GM12878 (cell line): ENCODE measurements at regions of chr7 and their contacts with region 1.

Region 1: DNA sequence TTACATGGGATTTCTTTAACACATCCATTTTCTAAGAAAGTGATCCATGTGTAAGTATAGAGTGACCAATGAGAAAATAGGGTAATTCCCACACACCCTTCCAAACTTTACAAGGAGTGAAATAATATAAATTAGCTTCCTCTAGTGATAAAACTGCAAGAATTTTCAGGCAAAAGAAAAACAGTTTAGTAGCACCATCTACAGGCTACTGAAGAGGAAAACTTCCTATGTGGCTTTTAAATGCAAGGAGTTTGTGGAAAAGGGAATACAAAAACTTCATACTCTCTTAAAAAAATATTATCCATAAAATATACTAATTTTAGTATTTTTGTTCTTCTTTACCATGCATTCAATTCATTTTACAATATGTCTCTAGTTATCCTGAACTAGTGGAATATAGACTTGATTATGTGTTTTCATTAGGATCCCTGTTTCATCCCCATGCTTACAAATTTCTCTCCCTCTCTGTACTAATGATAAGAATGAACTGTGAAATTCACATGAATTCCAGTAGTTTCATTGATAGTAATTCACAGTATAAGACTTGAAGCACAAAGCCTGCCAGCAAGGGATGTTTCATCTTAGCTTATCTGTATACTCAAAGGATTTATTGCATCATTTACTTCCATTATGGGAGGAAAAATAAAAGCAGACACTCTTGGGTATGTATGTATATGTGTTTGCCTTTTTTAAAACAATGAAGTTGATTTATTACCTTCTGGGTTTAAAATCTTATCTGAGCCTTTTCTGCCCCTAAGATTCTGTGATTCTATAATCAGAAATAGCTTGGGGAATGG is 442.9 kb downstream of the AUTS2 start:
- DNase-seq: no peak
- ATAC-seq: no peak
- H3K4me3 ChIP-seq: no peak overlapping the region
- H3K27ac ChIP-seq: no peak overlapping the region
- H3K4me1 ChIP-seq: no peaks in the 10 kb centered on the region
- H3K27me3 ChIP-seq: no peaks in the 10 kb centered on the region
- CTCF ChIP-seq: peak; percentile 26 to 52 (median 27); a peak in 4 of 6 replicates
- EP300 ChIP-seq: no peak
- POLR2A ChIP-seq: no peak
- RAD21 ChIP-seq: peak; percentile 65

Region 2: GRCh38 chr7:69403169-69403568 is 638.0 kb before region 1 on chr7:
- CTCF ChIA-PET with region 1: interaction called, 4 read pairs
- POLR2A ChIA-PET with region 1: no interaction called
- RAD21 ChIA-PET with region 1: no interaction called
- SMC1A ChIA-PET with region 1: no interaction called
- in situ Hi-C with region 1: no loop called
- intact Hi-C with region 1: loop called (anchors 10 kb)
- DNase-seq: no peak
- ATAC-seq: peak; percentile 95
- H3K4me3 ChIP-seq: no peak overlapping the region
- H3K27ac ChIP-seq: no peak overlapping the region
- H3K4me1 ChIP-seq: no peaks in the 10 kb centered on the region
- H3K27me3 ChIP-seq: no peaks in the 10 kb centered on the region
- CTCF ChIP-seq: peak; percentile 39 to 47 (median 43); a peak in 5 of 6 replicates
- EP300 ChIP-seq: no peak
- POLR2A ChIP-seq: no peak
- RAD21 ChIP-seq: peak; percentile 74

Region 3: GRCh38 chr7:69968969-69969556 is 72.1 kb before region 1 on chr7:
- CTCF ChIA-PET with region 1: no interaction called
- POLR2A ChIA-PET with region 1: no interaction called
- RAD21 ChIA-PET with region 1: no interaction called
- SMC1A ChIA-PET with region 1: no interaction called
- in situ Hi-C with region 1: no loop called
- intact Hi-C with region 1: no loop called
- DNase-seq: no peak
- ATAC-seq: peak; percentile 53
- H3K4me3 ChIP-seq: no peak overlapping the region
- H3K27ac ChIP-seq: no peak overlapping the region
- H3K4me1 ChIP-seq: peaks cover 7% of the 10 kb centered on the region; the same call in 1 of the 2 replicates
- H3K27me3 ChIP-seq: no peaks in the 10 kb centered on the region
- CTCF ChIP-seq: no peak
- EP300 ChIP-seq: no peak
- POLR2A ChIP-seq: no peak
- RAD21 ChIP-seq: no peak

Region 4: DNA sequence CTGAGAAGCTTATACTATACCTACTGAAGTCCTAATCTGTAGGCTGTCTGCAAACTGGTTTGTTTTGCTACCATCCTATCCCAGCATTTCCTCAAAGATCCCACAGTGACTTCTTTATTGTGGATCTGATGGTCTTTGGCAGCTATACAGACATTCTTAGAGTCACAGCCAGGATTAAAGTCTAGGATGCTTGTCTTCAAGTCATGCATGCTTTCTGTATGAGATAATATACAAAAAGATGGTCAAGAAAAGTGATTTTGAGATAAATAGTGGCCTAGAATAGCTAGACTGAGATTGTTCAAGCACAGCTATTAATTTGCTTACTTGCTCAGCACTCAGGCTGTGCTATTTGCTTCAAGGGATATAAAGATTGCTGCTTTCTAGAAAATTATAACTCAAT is 11.5 kb after region 1 on chr7:
- CTCF ChIA-PET with region 1: interaction called, 6 read pairs
- POLR2A ChIA-PET with region 1: no interaction called
- RAD21 ChIA-PET with region 1: no interaction called
- SMC1A ChIA-PET with region 1: interaction called, 17 read pairs
- in situ Hi-C with region 1: no loop called
- intact Hi-C with region 1: no loop called
- DNase-seq: no peak
- ATAC-seq: no peak
- H3K4me3 ChIP-seq: no peak overlapping the region
- H3K27ac ChIP-seq: no peak overlapping the region
- H3K4me1 ChIP-seq: no peaks in the 10 kb centered on the region
- H3K27me3 ChIP-seq: no peaks in the 10 kb centered on the region
- CTCF ChIP-seq: no peak
- EP300 ChIP-seq: no peak
- POLR2A ChIP-seq: no peak
- RAD21 ChIP-seq: no peak

Region 5: DNA sequence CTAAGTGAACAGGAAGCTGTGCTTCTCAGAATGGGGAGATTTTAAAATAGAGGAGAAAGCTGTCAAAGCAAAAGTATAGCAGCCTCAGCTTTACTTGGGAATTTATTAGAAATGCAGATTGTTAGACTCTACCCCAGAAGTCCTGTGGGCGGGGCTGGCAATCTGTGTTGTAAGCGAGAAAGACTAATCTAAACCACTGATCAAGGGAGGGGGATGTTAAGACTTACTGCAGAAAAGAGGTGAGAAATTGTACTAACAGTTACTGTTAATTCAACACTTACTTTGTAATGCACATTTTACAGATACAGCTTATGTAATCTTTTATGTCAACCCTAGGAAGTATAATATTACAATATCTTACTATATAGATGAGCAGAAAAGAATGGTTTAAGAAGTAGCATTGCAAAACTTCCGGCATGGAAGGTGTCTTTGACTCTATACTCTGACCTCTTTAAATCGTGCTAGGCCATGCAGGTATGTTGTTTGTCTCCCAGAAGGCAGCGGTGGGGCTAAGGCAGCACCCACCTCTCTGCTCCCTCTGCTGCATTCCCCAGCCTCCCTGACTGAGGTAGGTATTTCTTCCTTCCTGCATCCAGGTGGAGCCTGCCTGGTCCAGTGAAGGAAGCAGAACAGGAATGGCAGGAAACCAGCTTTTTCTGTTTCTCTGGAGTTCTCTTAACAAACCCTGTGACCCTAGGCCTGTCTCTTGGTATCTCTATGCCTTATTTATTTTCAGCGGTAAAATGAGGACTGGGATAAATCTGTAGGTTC is 19.3 kb after region 1 on chr7:
- CTCF ChIA-PET with region 1: interaction called, 6 read pairs
- POLR2A ChIA-PET with region 1: no interaction called
- RAD21 ChIA-PET with region 1: no interaction called
- SMC1A ChIA-PET with region 1: interaction called, 13 read pairs
- in situ Hi-C with region 1: no loop called
- intact Hi-C with region 1: no loop called
- DNase-seq: no peak
- ATAC-seq: no peak; the same call in 2 of the 3 replicates
- H3K4me3 ChIP-seq: no peak overlapping the region
- H3K27ac ChIP-seq: no peak overlapping the region
- H3K4me1 ChIP-seq: no peaks in the 10 kb centered on the region
- H3K27me3 ChIP-seq: no peaks in the 10 kb centered on the region
- CTCF ChIP-seq: no peak
- EP300 ChIP-seq: no peak
- POLR2A ChIP-seq: no peak
- RAD21 ChIP-seq: no peak

Region 6: GRCh38 chr7:70098905-70099672 is 57.9 kb after region 1 on chr7:
- CTCF ChIA-PET with region 1: no interaction called
- POLR2A ChIA-PET with region 1: interaction called, 10 read pairs
- RAD21 ChIA-PET with region 1: no interaction called
- SMC1A ChIA-PET with region 1: no interaction called
- in situ Hi-C with region 1: no loop called
- intact Hi-C with region 1: no loop called
- DNase-seq: no peak
- ATAC-seq: no peak
- H3K4me3 ChIP-seq: no peak overlapping the region
- H3K27ac ChIP-seq: no peak overlapping the region
- H3K4me1 ChIP-seq: no peaks in the 10 kb centered on the region
- H3K27me3 ChIP-seq: no peaks in the 10 kb centered on the region
- CTCF ChIP-seq: no peak
- EP300 ChIP-seq: no peak
- POLR2A ChIP-seq: no peak
- RAD21 ChIP-seq: no peak

Region 7: GRCh38 chr7:70154521-70155180 is 113.5 kb after region 1 on chr7:
- CTCF ChIA-PET with region 1: interaction called, 23 read pairs
- POLR2A ChIA-PET with region 1: no interaction called
- RAD21 ChIA-PET with region 1: interaction called, 19 read pairs
- SMC1A ChIA-PET with region 1: no interaction called
- in situ Hi-C with region 1: no loop called
- intact Hi-C with region 1: no loop called
- DNase-seq: no peak
- ATAC-seq: no peak
- H3K4me3 ChIP-seq: no peak overlapping the region
- H3K27ac ChIP-seq: no peak overlapping the region
- H3K4me1 ChIP-seq: no peaks in the 10 kb centered on the region
- H3K27me3 ChIP-seq: no peaks in the 10 kb centered on the region
- CTCF ChIP-seq: no peak
- EP300 ChIP-seq: no peak
- POLR2A ChIP-seq: no peak
- RAD21 ChIP-seq: no peak